CD14-positive monocyte (primary cell): ENCODE measurements at regions of chr18 and their contacts with region 1.

Region 1: DNA sequence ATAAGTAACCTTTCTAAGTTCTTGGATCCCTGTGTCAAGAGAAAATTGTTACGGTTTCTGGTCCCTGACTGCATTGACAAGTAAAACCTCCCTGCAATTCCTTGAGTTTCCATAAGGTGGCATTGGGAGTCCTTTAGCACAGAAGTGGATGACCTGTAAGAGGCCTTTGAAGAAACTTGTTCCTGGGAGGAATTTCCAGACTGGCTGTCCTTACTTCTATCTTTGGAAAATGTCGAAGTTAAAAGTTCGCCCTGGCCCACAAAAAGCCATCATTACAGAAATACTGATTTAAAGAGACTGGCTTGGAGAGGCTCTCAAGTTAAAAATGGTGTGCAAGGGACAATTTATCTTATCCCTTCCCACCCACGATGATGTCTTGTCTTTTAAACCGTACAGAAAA is 218.4 kb downstream of the CDH20 start:
- DNase-seq: peak; percentile 14 to 43 (median 35)
- H3K4me3 ChIP-seq: no peak overlapping the region
- H3K4me3 Mint-ChIP-seq: no peak overlapping the region
- H3K27ac ChIP-seq: no peak overlapping the region
- H3K27ac Mint-ChIP-seq: no peak overlapping the region
- H3K4me1 ChIP-seq: no peaks in the 10 kb centered on the region
- H3K4me1 Mint-ChIP-seq: peaks cover 8% of the 10 kb centered on the region
- H3K27me3 ChIP-seq: peaks cover 0 to 3% of the 10 kb centered on the region in 2 donors
- H3K27me3 Mint-ChIP-seq: peaks cover 3 to 14% (median 6%) of the 10 kb centered on the region in 3 donors
- CTCF ChIP-seq: peak; percentile 89

Region 2: GRCh38 chr18:60846396-60846795 is 705.2 kb before region 1 on chr18:
- intact Hi-C with region 1: no loop called
- DNase-seq: no peak
- H3K4me3 ChIP-seq: no peak overlapping the region
- H3K4me3 Mint-ChIP-seq: no peak overlapping the region
- H3K27ac ChIP-seq: no peak overlapping the region
- H3K27ac Mint-ChIP-seq: no peak overlapping the region
- H3K4me1 ChIP-seq: no peaks in the 10 kb centered on the region
- H3K4me1 Mint-ChIP-seq: peaks cover 3% of the 10 kb centered on the region
- H3K27me3 ChIP-seq: no peaks in the 10 kb centered on the region
- H3K27me3 Mint-ChIP-seq: peaks cover 0 to 5% (median 0%) of the 10 kb centered on the region in 3 donors
- CTCF ChIP-seq: no peak

Region 3: GRCh38 chr18:61528961-61529360 is 22.6 kb before region 1 on chr18:
- intact Hi-C with region 1: no loop called
- DNase-seq: no peak
- H3K4me3 ChIP-seq: no peak overlapping the region
- H3K4me3 Mint-ChIP-seq: no peak overlapping the region
- H3K27ac ChIP-seq: no peak overlapping the region
- H3K27ac Mint-ChIP-seq: no peak overlapping the region
- H3K4me1 ChIP-seq: no peaks in the 10 kb centered on the region
- H3K4me1 Mint-ChIP-seq: no peaks in the 10 kb centered on the region
- H3K27me3 ChIP-seq: no peaks in the 10 kb centered on the region
- H3K27me3 Mint-ChIP-seq: peaks cover 0 to 4% (median 2%) of the 10 kb centered on the region in 3 donors
- CTCF ChIP-seq: no peak

Region 4: GRCh38 chr18:61628085-61628484 is 76.5 kb after region 1 on chr18:
- intact Hi-C with region 1: no loop called
- DNase-seq: no peak
- H3K4me3 ChIP-seq: no peak overlapping the region
- H3K4me3 Mint-ChIP-seq: no peak overlapping the region
- H3K27ac ChIP-seq: no peak overlapping the region
- H3K27ac Mint-ChIP-seq: no peak overlapping the region
- H3K4me1 ChIP-seq: no peaks in the 10 kb centered on the region
- H3K4me1 Mint-ChIP-seq: no peaks in the 10 kb centered on the region
- H3K27me3 ChIP-seq: no peaks in the 10 kb centered on the region
- H3K27me3 Mint-ChIP-seq: peaks cover 2 to 4% (median 3%) of the 10 kb centered on the region in 3 donors
- CTCF ChIP-seq: no peak

Region 5: DNA sequence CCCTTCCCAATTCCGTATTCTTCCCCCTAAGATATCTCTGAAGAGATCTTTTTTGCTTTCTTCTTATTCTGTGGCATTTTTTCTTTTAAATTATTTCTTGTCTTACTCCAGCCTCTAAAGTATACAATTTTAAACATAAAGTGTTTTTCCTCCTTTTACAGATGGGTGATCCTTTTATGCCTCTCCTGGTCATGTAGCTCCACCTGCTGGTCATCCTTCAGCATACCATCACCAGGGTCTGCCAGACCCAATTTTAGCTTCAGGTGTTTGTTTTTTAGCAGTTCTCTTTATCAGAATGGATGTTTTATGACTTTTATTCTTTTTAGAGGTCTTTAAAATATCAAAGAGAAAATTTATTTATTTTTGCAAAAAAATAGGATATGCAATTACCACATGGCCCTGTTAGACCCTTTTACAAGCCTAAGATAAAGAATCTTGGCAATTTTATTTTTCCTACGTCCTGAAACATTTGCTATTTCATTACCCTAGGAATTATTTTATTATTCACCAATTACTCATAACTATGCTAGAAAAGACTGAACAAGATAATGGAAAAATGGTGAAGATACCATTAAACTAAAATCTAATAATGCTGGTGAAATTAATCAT is 579.8 kb after region 1 on chr18:
- intact Hi-C with region 1: loop called (anchors 2 to 5 kb)
- DNase-seq: peak; percentile 40 to 65 (median 60)
- H3K4me3 ChIP-seq: no peak overlapping the region
- H3K4me3 Mint-ChIP-seq: no peak overlapping the region
- H3K27ac ChIP-seq: no peak overlapping the region
- H3K27ac Mint-ChIP-seq: no peak overlapping the region
- H3K4me1 ChIP-seq: peaks cover 4 to 10% of the 10 kb centered on the region in 2 donors
- H3K4me1 Mint-ChIP-seq: peaks cover 14% of the 10 kb centered on the region
- H3K27me3 ChIP-seq: no peaks in the 10 kb centered on the region
- H3K27me3 Mint-ChIP-seq: no peaks in the 10 kb centered on the region
- CTCF ChIP-seq: peak; percentile 99